ENCODE measurements at regions of chr10 and their contacts with region 1.

Region 1: DNA sequence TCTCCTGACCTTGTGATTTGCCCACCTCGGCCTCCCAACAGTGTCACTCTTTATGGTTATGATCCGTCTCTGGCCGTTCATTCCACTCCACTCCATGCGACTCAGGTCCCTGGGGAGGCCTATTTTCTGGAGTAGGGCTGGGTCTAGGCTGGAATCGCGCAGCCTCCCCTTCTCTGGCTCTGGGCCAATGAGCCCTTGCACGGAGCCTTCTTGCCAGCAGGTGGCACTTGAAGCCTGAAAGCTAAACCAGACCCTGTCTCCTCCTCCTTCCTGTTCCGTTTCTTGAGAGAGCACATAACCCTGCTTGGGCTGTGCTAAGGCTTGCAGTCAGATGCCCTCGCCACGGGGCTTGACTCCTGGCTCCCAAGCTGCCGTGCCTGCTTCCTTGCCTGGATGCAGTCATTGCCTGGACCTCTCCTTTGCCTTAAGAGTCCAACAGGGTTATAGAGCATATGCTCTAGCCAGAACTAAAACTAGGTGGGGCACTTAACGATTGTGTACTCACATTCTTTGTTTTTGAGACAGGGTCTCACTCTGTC is 9.6 kb upstream of the DNAJB12 start:
- ATAC-seq: peak; percentile 95 to 99 (median 98)
- H3K4me3 ChIP-seq: no peak overlapping the region
- H3K27ac ChIP-seq: peak overlapping the region in 1 of 2 donors; percentile 66
- H3K4me1 ChIP-seq: peaks cover 0 to 4% of the 10 kb centered on the region in 2 donors

Region 2: DNA sequence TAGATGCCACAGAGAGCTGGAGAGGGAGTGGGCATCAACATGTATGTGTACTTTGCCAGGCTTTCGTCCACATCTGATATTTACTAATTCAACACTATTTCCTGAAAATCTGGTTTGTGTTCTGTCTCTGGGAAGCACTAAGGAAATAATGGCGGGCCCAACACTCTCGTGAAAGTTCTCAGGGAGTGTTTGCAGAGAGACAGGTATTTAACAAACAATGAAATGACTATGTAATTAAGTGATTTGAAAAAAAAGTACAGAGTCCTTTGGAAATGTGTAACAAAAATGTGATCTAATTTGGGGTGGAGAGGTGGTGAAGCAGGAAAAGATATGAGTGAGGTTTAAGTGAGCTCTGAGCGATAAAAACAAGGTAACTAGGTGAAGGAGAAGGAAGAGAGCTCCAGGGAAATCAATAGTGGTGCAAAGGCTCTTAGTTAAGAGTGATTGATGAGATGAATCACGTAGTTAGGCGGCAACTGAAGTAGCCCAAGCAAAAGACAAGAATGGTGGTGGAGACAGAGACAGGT is 85.7 kb after region 1 on chr10:
- in situ Hi-C with region 1: no loop called
- ATAC-seq: no peak
- H3K4me3 ChIP-seq: no peak overlapping the region
- H3K27ac ChIP-seq: no peak overlapping the region
- H3K4me1 ChIP-seq: peaks cover 0 to 5% of the 10 kb centered on the region in 2 donors

Region 3: GRCh38 chr10:72692057-72692910 is 328.0 kb after region 1 on chr10 and contains the start of gene MCU:
- in situ Hi-C with region 1: loop called in 1 of 9 experiments (anchors 25 kb)
- ATAC-seq: peak; percentile 89 to 99 (median 98)
- H3K4me3 ChIP-seq: peak within 1 kb of the TSS; percentile 89 to 99 (median 98)
- H3K27ac ChIP-seq: peak within 1 kb of the TSS; percentile 81 to 82
- H3K4me1 ChIP-seq: peaks cover 7 to 8% of the 10 kb centered on the region in 2 donors
- total RNA-seq, gene MCU: 10.5 to 26.8 (median 17.6) TPM

Region 4: DNA sequence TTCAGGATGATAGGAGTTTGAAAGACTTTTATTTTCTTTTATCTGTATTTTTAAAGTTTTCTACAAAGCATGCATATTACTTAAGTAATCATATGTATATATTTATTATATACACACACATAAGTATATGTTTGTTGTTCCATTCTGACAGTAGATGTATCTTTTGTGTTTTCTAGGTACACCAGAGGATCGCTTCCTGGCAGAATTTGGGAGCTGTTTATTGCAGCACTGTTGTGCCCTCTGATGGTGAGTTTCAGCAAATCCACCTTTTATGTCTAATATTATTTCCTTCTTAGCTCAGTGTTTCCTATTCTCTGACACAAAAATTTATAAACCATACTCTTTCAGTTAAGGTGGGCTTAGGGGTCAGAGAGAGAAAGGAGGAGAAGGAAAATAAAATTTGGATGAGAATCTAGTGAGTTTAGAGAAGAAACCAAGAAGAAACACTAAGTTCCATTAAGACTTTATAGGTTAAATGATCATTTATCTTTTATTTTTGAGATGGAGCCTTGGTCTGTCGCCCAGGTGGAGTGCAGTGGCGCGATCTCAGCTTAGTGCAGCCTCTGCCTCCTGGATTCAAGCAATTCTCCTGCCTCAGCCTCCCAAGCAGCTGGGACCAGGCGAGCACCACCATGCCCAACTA is 470.0 kb after region 1 on chr10:
- in situ Hi-C with region 1: loop called in 6 of 9 experiments (anchors 10 to 25 kb)
- ATAC-seq: peak in 4 of 8 experiments; percentile 30 to 68 (median 55)
- H3K4me3 ChIP-seq: no peak overlapping the region
- H3K27ac ChIP-seq: no peak overlapping the region
- H3K4me1 ChIP-seq: no peaks in the 10 kb centered on the region

Region 5: GRCh38 chr10:73060738-73061635 is 696.7 kb after region 1 on chr10:
- in situ Hi-C with region 1: loop called in 2 of 9 experiments (anchors 25 kb)
- ATAC-seq: peak in 4 of 8 experiments; percentile 50 to 77 (median 70)
- H3K4me3 ChIP-seq: no peak overlapping the region
- H3K27ac ChIP-seq: no peak overlapping the region
- H3K4me1 ChIP-seq: no peaks in the 10 kb centered on the region